IMR-90 (cell line): ENCODE measurements at regions of chr5 and their contacts with region 1.

Region 1: GRCh38 chr5:92309336-92309991 is 926.3 kb upstream of the ARRDC3 start:
- DNase-seq: peak; percentile 59
- ATAC-seq: peak; percentile 74
- H3K4me3 ChIP-seq: no peak overlapping the region
- H3K27ac ChIP-seq: no peak overlapping the region
- H3K4me1 ChIP-seq: no peaks in the 10 kb centered on the region
- H3K27me3 ChIP-seq: no peaks in the 10 kb centered on the region
- CTCF ChIP-seq: peak; percentile 66
- POLR2A ChIP-seq: no peak
- RAD21 ChIP-seq: peak; percentile 77

Region 2: DNA sequence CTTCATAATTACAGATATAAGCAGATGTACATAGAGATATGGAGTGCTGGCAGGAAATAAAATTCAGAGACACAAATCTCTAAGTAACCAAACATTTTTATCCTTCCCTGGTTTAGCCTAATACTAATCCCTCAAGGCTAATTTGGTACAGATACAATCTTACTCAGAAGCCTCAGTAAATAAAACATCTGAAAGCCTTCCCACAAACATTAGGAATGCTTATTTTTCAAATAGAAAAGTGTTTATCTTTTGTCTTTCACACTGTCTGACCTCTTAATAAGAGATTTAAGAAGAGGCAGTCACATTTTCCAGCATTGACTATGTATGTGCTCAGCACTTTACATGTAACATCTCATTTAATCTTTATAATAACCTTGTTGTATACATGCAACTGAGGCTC is 1325.7 kb before region 1 on chr5:
- CTCF ChIA-PET with region 1: no interaction called
- POLR2A ChIA-PET with region 1: no interaction called
- dilution Hi-C with region 1: no loop called
- in situ Hi-C with region 1: no loop called
- intact Hi-C with region 1: no loop called
- DNase-seq: peak; percentile 13
- ATAC-seq: peak; percentile 44
- H3K4me3 ChIP-seq: no peak overlapping the region
- H3K27ac ChIP-seq: no peak overlapping the region
- H3K4me1 ChIP-seq: peaks cover 4% of the 10 kb centered on the region
- H3K27me3 ChIP-seq: no peaks in the 10 kb centered on the region; the same call in 1 of the 2 replicates
- CTCF ChIP-seq: no peak
- POLR2A ChIP-seq: no peak
- RAD21 ChIP-seq: no peak

Region 3: GRCh38 chr5:92364986-92365550 is 55.6 kb after region 1 on chr5:
- CTCF ChIA-PET with region 1: no interaction called
- POLR2A ChIA-PET with region 1: no interaction called
- dilution Hi-C with region 1: no loop called
- in situ Hi-C with region 1: no loop called
- intact Hi-C with region 1: no loop called
- DNase-seq: peak; percentile 23
- ATAC-seq: no peak
- H3K4me3 ChIP-seq: no peak overlapping the region
- H3K27ac ChIP-seq: no peak overlapping the region
- H3K4me1 ChIP-seq: no peaks in the 10 kb centered on the region
- H3K27me3 ChIP-seq: no peaks in the 10 kb centered on the region
- CTCF ChIP-seq: no peak
- POLR2A ChIP-seq: no peak
- RAD21 ChIP-seq: no peak

Region 4: DNA sequence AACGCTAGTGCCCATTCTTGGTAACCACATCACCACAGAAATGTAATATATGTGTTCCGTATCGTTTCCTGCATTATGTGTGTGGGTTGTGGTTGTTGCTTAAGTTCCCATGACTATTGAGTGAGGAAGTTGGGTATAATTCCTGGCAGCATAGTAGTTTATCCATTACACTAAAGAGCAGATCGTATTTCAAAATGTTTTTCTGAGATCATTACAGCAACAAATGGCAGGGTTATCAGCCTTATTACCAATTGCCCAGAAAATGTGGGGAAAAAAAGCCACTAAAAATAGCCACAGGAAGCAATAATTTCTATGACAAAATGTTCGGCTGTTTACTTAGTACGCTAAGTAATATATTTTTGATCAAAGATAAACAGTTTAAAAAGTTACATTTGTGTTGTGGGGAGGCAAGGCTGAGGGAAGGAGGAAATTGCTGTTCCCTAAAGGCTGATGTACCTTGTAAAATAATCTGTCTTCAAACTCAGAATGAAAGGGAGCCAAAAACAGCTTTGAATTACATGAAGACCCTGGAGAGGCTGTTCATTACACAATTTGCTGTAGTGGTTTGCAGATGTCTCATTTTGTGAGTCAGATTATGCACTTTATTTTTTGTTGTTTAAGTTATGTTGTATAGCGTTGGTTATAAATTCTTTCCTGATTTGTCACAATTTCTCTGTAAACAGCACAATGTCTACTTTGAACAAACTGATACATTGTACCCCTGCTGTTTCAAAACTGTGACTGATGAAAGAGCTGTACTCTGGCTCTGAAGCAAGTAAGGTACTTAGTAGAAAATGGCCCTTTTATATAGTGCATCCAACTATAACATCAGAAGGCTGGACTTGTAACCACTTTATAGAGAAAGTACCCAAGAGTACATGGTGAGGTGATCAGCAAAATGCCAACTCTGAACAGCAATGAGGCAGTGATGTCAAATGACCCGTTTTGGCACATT is 243.0 kb after region 1 on chr5:
- CTCF ChIA-PET with region 1: no interaction called
- POLR2A ChIA-PET with region 1: no interaction called
- dilution Hi-C with region 1: no loop called
- in situ Hi-C with region 1: no loop called
- intact Hi-C with region 1: loop called (anchors 5 kb)
- DNase-seq: peak; percentile 99
- ATAC-seq: peak; percentile 83
- H3K4me3 ChIP-seq: no peak overlapping the region; the same call in 1 of the 2 replicates
- H3K27ac ChIP-seq: peak overlapping the region; percentile 53
- H3K4me1 ChIP-seq: no peaks in the 10 kb centered on the region; the same call in 1 of the 2 replicates
- H3K27me3 ChIP-seq: no peaks in the 10 kb centered on the region
- CTCF ChIP-seq: no peak
- POLR2A ChIP-seq: no peak
- RAD21 ChIP-seq: peak; percentile 24; the same call in 1 of the 2 replicates

Region 5: GRCh38 chr5:92909602-92909962 is 600.1 kb after region 1 on chr5:
- CTCF ChIA-PET with region 1: no interaction called
- POLR2A ChIA-PET with region 1: no interaction called
- dilution Hi-C with region 1: no loop called
- in situ Hi-C with region 1: no loop called
- intact Hi-C with region 1: loop called (anchors 5 kb)
- DNase-seq: peak; percentile 11
- ATAC-seq: no peak
- H3K4me3 ChIP-seq: no peak overlapping the region
- H3K27ac ChIP-seq: no peak overlapping the region
- H3K4me1 ChIP-seq: peaks cover 3% of the 10 kb centered on the region
- H3K27me3 ChIP-seq: no peaks in the 10 kb centered on the region
- CTCF ChIP-seq: peak; percentile 43
- POLR2A ChIP-seq: no peak
- RAD21 ChIP-seq: peak; percentile 49

Region 6: GRCh38 chr5:93789173-93790070 is 1480.0 kb after region 1 on chr5:
- CTCF ChIA-PET with region 1: no interaction called
- POLR2A ChIA-PET with region 1: no interaction called
- dilution Hi-C with region 1: no loop called
- in situ Hi-C with region 1: loop called (anchors 25 kb)
- intact Hi-C with region 1: loop called (anchors 10 kb)
- DNase-seq: peak; percentile 88
- ATAC-seq: peak; percentile 76
- H3K4me3 ChIP-seq: no peak overlapping the region
- H3K27ac ChIP-seq: no peak overlapping the region
- H3K4me1 ChIP-seq: peaks cover 4% of the 10 kb centered on the region; the same call in 1 of the 2 replicates
- H3K27me3 ChIP-seq: no peaks in the 10 kb centered on the region
- CTCF ChIP-seq: peak; percentile 30; the same call in 1 of the 2 replicates
- POLR2A ChIP-seq: no peak
- RAD21 ChIP-seq: no peak; the same call in 1 of the 2 replicates